Dorsolateral prefrontal cortex (tissue), 120 donors: ENCODE measurements at regions of chr2 and their contacts with region 1.

Region 1: GRCh38 chr2:79855264-79856006 is 342.6 kb downstream of the CTNNA2 start:
- DNase-seq: peak in 8 of 10 donors; percentile 11 to 67 (median 55)
- H3K4me3 ChIP-seq: peak overlapping the region in 35 of 59 donors; percentile 6 to 56 (median 34)
- H3K27ac ChIP-seq: peak overlapping the region in 15 of 59 donors; percentile 0 to 73 (median 30)
- H3K27me3 ChIP-seq: no peaks in the 10 kb centered on the region
- CTCF ChIP-seq: peak in 55 of 56 donors; percentile 17 to 76 (median 60)

Region 2: GRCh38 chr2:79219383-79219988 is 635.9 kb before region 1 on chr2:
- intact Hi-C with region 1: loop called in 1 of 2 experiments (anchors 5 kb)
- DNase-seq: peak in 2 of 10 donors; percentile 3 to 56
- H3K4me3 ChIP-seq: no peak overlapping the region
- H3K27ac ChIP-seq: no peak overlapping the region
- H3K27me3 ChIP-seq: no peaks in the 10 kb centered on the region
- CTCF ChIP-seq: peak; percentile 68 to 98 (median 81)

Region 3: GRCh38 chr2:79512442-79513401 is 342.7 kb before region 1 on chr2 and contains the start of gene CTNNA2:
- intact Hi-C with region 1: loop called in 1 of 2 experiments (anchors 5 kb)
- DNase-seq: peak; percentile 45 to 85 (median 74)
- H3K4me3 ChIP-seq: peak within 1 kb of the TSS; percentile 53 to 81 (median 67)
- H3K27ac ChIP-seq: peak within 1 kb of the TSS in 52 of 59 donors; percentile 17 to 88 (median 74)
- H3K27me3 ChIP-seq: no peaks in the 10 kb centered on the region
- CTCF ChIP-seq: peak in 45 of 56 donors; percentile 10 to 72 (median 38)
- total RNA-seq, gene CTNNA2: 75.3 to 253 (median 170) TPM

Region 4: GRCh38 chr2:79660557-79660956 is 194.9 kb before region 1 on chr2:
- intact Hi-C with region 1: loop called (anchors 10 kb)
- DNase-seq: no peak
- H3K4me3 ChIP-seq: no peak overlapping the region
- H3K27ac ChIP-seq: no peak overlapping the region
- H3K27me3 ChIP-seq: no peaks in the 10 kb centered on the region
- CTCF ChIP-seq: peak in 34 of 56 donors; percentile 12 to 65 (median 31)

Region 5: DNA sequence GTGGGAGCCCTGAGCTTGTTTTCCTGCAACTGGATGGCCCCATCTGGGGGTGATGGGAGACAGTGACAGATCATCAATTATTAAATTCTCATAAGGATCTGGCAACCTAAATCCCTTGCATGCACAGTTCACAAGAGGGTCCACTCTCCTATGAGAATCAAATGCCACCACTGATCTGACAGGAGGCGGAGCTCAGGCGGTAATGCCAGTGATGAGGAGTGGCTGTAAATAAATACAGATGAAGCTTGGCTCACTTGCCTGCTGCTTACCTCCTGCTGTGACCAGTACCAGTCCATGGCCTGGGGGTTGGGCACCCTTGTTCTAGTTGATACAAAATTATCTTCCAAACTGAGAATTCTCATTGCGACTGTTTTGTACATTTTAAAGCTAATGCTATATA is 83.9 kb before region 1 on chr2:
- intact Hi-C with region 1: loop called in 1 of 2 experiments (anchors 10 kb)
- DNase-seq: no peak
- H3K4me3 ChIP-seq: peak overlapping the region in 2 of 59 donors; percentile 14 to 47
- H3K27ac ChIP-seq: peak overlapping the region in 28 of 59 donors; percentile 4 to 85 (median 48)
- H3K27me3 ChIP-seq: no peaks in the 10 kb centered on the region
- CTCF ChIP-seq: no peak